PC-3 (cell line): ENCODE measurements at regions of chr3 and their contacts with region 1.

Region 1: DNA sequence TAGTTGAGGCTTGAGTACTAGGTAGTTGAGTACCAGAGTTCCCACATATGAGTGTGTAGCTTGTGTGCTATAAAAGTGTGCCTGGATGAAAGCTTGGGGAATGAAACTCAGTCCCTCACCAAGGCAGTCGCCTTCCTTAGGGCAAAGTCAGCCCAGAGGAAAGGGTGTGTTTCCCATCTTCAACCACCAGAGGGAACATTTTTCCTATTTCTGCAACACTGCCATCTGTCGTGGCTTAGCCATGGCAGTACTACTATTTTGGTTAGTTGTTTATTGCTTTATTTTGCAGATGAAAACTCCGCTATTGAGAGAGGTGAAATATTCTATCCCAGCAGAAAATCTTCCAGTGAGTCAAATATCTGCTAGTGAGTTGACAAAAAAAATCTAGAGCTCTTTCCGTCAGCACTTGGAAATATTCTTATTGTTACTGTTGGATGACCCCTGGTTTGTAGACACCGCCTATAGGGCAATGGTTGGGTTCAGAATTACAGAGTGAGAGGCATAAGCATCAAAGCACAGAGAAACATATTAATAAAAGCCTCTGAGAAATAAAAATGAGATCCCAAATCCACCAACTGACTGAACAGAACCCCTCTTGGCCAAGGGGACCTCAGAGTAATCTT is 239.9 kb downstream of the CPNE4 start:
- DNase-seq: peak; percentile 76
- ATAC-seq: peak; percentile 81
- H3K4me3 ChIP-seq: no peak overlapping the region
- H3K27ac ChIP-seq: no peak overlapping the region
- H3K4me1 ChIP-seq: peaks cover 11% of the 10 kb centered on the region; the same call in 1 of the 2 replicates
- H3K27me3 ChIP-seq: no peaks in the 10 kb centered on the region
- CTCF ChIP-seq: peak; percentile 80

Region 2: GRCh38 chr3:131231710-131232389 is 563.0 kb before region 1 on chr3:
- CTCF ChIA-PET with region 1: no interaction called
- POLR2A ChIA-PET with region 1: no interaction called
- intact Hi-C with region 1: loop called (anchors 5 kb)
- DNase-seq: peak; percentile 49
- ATAC-seq: peak; percentile 59
- H3K4me3 ChIP-seq: no peak overlapping the region
- H3K27ac ChIP-seq: no peak overlapping the region
- H3K4me1 ChIP-seq: no peaks in the 10 kb centered on the region
- H3K27me3 ChIP-seq: no peaks in the 10 kb centered on the region
- CTCF ChIP-seq: peak; percentile 41

Region 3: GRCh38 chr3:131630097-131630496 is 164.8 kb before region 1 on chr3:
- CTCF ChIA-PET with region 1: no interaction called
- POLR2A ChIA-PET with region 1: no interaction called
- intact Hi-C with region 1: no loop called
- DNase-seq: peak; percentile 5
- ATAC-seq: no peak
- H3K4me3 ChIP-seq: no peak overlapping the region
- H3K27ac ChIP-seq: no peak overlapping the region
- H3K4me1 ChIP-seq: no peaks in the 10 kb centered on the region
- H3K27me3 ChIP-seq: no peaks in the 10 kb centered on the region
- CTCF ChIP-seq: no peak

Region 4: GRCh38 chr3:131903988-131904415 is 109.1 kb after region 1 on chr3:
- CTCF ChIA-PET with region 1: interaction called, 4 read pairs
- POLR2A ChIA-PET with region 1: no interaction called
- intact Hi-C with region 1: loop called (anchors 2 kb)
- DNase-seq: peak; percentile 93
- ATAC-seq: peak; percentile 92
- H3K4me3 ChIP-seq: no peak overlapping the region; the same call in 1 of the 2 replicates
- H3K27ac ChIP-seq: peak overlapping the region; percentile 88
- H3K4me1 ChIP-seq: peaks cover 28% of the 10 kb centered on the region
- H3K27me3 ChIP-seq: no peaks in the 10 kb centered on the region
- CTCF ChIP-seq: no peak

Region 5: DNA sequence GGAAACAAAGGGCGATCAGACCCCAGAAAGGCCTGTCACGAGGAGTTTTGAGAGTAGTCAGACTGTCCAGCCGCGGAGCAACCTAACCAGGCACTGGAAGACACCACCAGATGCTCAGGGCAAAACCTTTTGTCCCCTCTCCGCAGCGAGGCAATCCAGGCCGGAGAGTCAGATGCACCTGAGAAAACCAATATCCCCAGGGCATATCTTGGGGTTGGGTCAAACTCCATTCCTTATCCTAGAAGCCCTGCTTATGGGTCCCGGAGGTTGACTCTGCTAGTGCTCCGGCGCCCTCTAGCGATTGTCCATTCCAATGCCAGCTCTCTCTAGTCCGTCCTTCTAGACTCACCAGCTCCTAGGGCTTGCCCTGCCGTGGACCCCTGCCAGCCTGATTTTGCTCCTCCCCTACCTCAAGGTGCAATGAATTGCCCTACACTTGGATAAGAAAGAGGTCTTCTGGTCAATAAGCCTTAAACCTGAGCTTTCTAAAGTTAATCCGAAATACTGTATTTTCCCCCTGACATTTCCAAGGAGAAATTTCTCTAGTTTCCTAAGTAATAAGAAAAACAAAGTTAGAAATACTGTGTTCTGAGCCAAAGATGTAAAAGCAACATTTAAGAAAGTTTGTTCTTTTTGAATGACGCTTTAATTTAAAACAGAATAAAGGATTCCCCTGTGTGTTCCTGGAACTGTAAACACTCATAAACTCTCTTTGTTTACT is 234.5 kb after region 1 on chr3:
- CTCF ChIA-PET with region 1: interaction called, 3 read pairs
- POLR2A ChIA-PET with region 1: no interaction called
- intact Hi-C with region 1: loop called (anchors 1 kb)
- DNase-seq: peak; percentile 94
- ATAC-seq: peak; percentile 98
- H3K4me3 ChIP-seq: peak overlapping the region; percentile 34
- H3K27ac ChIP-seq: peak overlapping the region; percentile 64
- H3K4me1 ChIP-seq: peaks cover 13% of the 10 kb centered on the region
- H3K27me3 ChIP-seq: no peaks in the 10 kb centered on the region
- CTCF ChIP-seq: peak; percentile 87